ENCODE measurements at regions of chr1 and their contacts with region 1.

Region 1: DNA sequence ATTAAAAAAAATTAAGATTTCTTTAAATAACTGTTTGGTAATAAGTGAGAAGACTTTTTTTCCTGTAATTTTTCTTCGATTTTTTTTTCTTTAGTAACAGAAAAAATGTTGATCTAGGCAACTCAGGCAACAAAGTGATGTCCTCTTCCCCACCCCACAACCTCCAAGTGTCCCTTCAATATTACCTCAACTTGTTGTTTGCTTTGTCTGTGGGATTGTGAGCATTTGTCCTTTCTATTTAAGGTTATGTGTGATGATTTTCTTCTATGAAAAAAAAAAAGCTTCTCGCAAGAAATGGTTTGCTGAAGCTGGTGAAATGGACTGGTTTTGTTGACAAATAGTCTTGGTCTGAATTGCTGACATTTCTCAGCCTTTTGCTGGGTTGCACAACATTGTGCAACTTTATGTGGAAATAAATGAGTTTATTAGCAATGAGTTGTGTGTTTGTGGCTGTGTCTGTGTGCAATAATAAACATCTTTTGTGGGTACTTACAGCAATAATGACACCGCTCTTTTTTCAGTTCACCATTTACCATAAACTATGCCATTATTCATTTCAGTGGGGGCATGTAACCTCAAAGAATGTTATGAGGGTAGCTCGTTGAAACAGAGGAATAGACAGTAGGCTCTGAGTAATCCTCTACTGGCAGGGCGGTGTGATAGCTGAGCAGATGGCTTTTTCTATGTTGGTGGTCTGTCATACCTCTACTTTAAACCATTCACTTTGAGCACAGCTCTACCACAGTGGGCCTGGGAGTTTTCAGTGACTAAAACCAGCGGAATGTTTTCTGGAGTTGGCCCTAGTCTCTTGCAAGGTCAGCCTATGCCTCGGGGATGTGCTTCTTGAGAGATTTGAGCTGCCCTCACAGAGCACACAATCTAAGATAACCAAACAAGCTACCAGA is 218.5 kb downstream of the HLX start:
- DNase-seq: no peak

Region 2: GRCh38 chr1:220879509-220880361 is 218.0 kb before region 1 on chr1:
- intact Hi-C with region 1: loop called (anchors 5 kb)
- DNase-seq: no peak

Region 3: DNA sequence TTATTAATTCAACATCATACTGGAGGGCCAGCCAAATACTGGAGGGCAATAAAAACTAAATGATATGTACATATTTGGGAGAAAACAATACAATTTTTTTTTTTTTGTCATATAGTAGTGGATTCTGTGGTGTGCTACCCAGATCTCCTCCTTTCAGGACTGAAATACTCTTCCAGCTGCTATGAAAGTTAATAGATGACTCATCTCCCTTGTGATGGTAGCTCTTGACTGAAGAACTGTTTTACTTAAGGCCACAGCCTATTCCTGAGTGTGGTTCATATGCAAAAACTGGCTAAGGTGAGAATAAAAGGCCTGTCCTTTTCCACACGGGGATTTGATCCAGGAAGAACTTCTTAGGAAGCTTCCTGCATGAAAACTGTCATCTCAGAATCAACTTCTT is 89.4 kb after region 1 on chr1:
- intact Hi-C with region 1: no loop called
- DNase-seq: no peak

Measured in posterior cingulate gyrus (tissue), 11 donors.